Activated T-helper 1 cell treated with anti-CD3 and anti-CD28 coated beads, Interleukin-12 subunit alpha, Interleukin-12 subunit beta, Interleukin-2, Interleukin-4 antibody, amounts not matched to agents 30 ng/mL and 10 ng/mL and 1 ng/mL, durations not matched to agents 14 hours and 24 hours and 36 hours (primary cell): ENCODE measurements at regions of chr2 and their contacts with region 1.

Region 1: DNA sequence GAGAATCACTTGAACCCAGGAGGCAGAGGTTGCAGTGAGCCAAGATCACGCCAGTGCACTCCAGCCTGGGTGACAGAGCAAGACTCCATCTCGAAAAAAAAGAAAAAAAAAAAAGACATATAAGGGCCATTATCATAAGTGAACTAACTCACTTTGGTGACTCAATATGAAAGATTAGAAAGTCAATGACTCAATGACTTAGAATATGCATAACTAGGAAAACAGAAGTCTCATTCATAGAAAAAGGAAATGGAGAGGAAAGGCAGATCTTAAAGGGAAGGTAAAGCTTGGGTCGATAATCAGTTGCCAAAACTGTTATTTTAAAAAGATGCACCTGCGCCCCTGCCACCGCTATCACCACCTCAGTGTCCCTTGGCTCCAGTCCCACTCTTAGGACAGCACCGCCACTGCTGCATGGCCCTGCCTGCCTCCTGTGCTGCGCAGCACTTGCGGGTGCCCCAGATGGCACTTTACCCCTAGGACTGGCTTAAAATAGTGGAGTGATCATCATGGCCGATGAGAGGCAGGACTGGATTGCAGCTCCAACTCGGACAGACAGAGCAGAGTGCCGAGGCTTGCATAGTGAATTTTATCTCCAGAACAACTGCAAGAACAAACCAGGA is 54.7 kb downstream of the INO80D start:
- DNase-seq: no peak
- H3K4me3 Mint-ChIP-seq: no peak overlapping the region
- H3K27ac Mint-ChIP-seq: peak overlapping the region; percentile 25
- H3K4me1 Mint-ChIP-seq: peaks cover 55% of the 10 kb centered on the region
- H3K27me3 Mint-ChIP-seq: no peaks in the 10 kb centered on the region

Region 2: DNA sequence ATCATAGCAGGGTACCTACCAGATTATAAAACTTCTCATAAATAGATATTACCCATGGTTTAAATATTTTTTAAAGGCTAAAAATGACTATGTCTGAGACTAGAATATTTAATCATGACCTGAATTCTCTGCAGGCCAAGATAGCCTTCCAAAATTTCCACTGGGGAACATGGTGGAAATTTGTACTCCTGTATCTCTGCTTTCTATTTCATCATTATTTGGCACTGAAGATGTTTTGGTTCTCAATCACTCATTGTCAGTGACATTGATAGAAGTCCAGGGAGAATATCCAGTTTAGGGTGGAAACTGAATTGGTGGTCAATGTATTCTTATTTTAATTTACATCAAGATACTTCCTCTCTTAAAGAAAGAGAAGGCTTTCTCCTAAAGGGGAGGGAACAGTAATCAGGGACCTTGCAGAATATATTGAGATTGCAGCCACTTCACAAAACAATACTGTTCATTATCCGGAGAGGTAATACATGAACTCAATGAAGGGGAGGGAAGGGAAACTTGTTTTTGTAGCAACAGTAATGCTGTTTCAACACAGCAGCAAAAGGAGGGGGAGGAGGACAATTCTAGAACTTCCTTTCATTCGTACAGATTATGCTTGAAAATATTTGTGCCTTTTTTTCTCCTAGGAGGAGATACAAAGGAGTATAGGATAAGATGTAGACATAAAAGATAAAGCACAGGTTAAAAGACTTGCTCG is 162.6 kb after region 1 on chr2:
- intact Hi-C with region 1: no loop called
- DNase-seq: no peak
- H3K4me3 Mint-ChIP-seq: no peak overlapping the region
- H3K27ac Mint-ChIP-seq: no peak overlapping the region
- H3K4me1 Mint-ChIP-seq: no peaks in the 10 kb centered on the region
- H3K27me3 Mint-ChIP-seq: peaks cover 20% of the 10 kb centered on the region

Region 3: DNA sequence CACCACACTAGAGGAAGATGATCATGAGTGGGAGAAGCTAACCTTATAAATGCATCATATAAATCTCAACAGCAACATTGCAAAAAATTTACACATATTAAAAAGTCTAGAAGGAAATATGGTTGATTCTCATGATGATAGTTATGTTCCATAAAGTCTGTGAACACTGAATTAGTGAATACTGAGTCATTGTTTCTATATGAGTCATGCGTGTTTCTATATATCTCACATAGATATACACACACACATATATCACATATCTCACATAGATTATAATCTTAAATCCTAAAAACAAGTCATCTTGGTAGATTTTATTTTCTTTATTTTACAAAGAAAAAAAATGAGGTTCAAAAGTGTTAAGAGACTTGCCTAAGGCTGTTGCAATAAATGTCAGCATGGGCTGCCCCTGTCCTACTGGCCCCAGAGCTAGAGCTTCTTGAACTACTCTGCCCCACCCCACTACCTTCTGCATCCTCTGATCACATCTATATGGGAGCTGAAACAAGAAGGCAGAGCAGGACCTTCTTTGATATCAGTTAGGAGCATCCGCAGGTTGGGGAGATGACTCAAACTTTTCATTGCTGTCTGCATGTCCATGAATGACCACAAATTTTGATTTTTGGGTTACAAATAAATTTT is 330.3 kb after region 1 on chr2:
- intact Hi-C with region 1: loop called (anchors 2 kb)
- DNase-seq: no peak
- H3K4me3 Mint-ChIP-seq: no peak overlapping the region
- H3K27ac Mint-ChIP-seq: peak overlapping the region; percentile 22
- H3K4me1 Mint-ChIP-seq: peaks cover 5% of the 10 kb centered on the region
- H3K27me3 Mint-ChIP-seq: no peaks in the 10 kb centered on the region